ENCODE measurements at regions of chr1 and their contacts with region 1.

Region 1: DNA sequence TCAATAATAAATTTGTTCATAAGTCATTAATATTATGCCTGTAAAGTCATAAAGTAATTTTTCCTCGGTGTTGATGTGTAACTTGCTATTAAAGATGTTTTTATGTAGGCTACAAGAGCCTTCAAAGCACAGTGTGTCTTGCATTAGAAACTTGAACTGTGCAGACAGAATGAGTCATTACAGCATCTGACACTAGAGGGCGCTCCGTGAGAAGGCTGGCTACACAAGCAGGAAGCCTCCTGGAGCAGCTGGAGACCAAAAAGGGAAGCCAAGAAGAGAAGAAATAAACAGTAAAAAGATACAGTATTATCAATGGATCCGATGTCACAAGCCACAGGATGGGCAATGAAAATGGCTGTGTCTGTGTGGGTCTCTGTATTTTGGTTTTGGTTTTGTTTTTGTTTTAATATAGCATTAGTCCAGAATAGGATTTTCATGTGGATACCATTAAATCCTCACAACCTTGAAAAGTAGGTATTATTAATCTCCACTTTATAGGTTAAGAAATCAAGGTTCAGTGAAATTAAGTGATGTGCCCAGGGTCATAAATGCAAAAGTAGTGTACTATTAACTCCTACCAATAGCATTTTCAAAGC is 16.1 kb upstream of the LRRC8D start:
- DNase-seq: peak; percentile 92
- H3K4me3 ChIP-seq: no peak overlapping the region
- H3K27ac ChIP-seq: no peak overlapping the region
- H3K4me1 ChIP-seq: peaks cover 0 to 24% (median 17%) of the 10 kb centered on the region in 4 donors
- H3K27me3 ChIP-seq: no peaks in the 10 kb centered on the region
- CTCF ChIP-seq: peak; percentile 83 to 91 (median 86)
- EP300 ChIP-seq: no peak
- POLR2A ChIP-seq: no peak

Region 2: DNA sequence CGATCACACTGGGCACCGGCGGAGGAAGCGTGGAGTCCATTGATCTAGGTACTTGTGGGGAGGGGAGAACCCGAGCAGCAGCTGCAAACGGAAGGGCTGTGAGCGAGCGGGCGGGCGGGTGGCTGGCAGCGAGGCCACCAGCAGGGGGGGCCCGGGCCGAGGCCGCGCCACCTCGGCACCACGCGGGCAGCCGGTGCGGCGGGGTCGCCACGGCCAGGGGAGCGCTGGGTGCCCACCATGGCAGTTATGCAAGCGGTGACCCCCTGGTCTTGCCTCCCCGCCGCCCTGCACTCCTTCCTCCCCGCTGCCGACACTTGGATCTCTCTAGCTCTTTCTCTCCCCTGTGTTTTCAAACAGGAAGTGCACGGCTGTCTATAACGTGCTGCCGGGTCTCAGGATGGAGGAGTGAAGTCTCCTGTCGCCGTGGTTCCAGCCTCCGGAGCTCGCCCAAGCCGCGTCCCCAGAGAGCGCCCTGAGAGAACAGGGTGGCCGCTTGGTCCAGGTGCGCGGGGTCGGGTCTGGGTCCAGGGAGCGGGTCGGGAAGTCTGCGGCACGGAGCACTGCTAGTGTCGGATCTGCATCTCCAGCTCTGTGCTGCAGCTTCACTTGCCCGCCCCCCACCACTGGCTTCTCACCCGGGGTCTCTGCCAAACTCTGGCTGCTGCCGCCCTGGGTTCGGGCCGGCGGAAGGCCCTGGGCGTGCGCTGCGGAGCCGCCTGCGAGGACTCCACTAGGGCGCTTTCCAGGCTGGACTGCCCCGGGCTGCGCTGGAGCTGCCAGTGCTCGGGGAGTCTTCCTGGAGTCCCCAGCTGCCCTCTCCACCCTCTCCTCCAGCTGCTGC is 38.8 kb after region 1 on chr1:
- intact Hi-C with region 1: loop called (anchors 5 kb)
- DNase-seq: peak; percentile 77
- H3K4me3 ChIP-seq: peak overlapping the region; percentile 61 to 80 (median 70)
- H3K27ac ChIP-seq: peak overlapping the region; percentile 71 to 74 (median 71)
- H3K4me1 ChIP-seq: peaks cover 0 to 20% (median 14%) of the 10 kb centered on the region in 4 donors
- H3K27me3 ChIP-seq: no peaks in the 10 kb centered on the region
- CTCF ChIP-seq: peak in 2 of 4 experiments; percentile 30 to 75
- EP300 ChIP-seq: no peak
- POLR2A ChIP-seq: no peak

Region 3: DNA sequence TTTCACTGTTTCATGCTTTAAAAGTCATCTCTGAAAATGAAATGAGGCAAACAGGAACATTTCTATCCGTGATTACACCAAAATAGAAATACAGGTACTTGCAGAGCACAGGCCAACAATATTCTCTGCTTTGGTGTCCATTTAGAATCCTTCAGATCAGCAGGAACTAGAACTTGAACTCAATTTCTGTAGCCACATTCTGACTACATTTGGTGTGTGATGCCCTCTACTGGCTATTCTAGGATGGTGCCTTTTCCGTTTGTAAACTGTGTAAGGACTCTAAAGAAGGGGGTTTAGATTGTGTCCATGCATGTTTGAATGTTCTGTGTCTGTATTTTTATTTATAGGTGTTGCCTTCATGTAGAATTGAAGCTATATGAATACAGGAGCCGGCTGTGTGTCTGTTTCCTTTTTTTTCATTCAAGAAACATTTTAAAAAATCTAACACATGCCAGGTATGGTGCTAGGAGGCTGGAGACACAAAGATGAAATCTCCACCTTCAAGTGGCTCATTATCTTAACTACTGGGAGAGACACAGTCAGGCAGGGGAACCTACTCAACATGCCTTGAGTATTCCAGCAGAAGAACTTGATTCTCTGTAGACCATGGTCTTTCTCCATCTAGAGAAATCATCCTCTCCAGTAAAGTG is 182.6 kb after region 1 on chr1:
- intact Hi-C with region 1: loop called (anchors 2 kb)
- DNase-seq: no peak
- H3K4me3 ChIP-seq: no peak overlapping the region
- H3K27ac ChIP-seq: no peak overlapping the region
- H3K4me1 ChIP-seq: no peaks in the 10 kb centered on the region
- H3K27me3 ChIP-seq: no peaks in the 10 kb centered on the region
- CTCF ChIP-seq: peak; percentile 61 to 83 (median 76)
- EP300 ChIP-seq: no peak
- POLR2A ChIP-seq: no peak

Measured in sigmoid colon (tissue), 7 donors.